ENCODE measurements at regions of chr5 and their contacts with region 1.

Region 1: DNA sequence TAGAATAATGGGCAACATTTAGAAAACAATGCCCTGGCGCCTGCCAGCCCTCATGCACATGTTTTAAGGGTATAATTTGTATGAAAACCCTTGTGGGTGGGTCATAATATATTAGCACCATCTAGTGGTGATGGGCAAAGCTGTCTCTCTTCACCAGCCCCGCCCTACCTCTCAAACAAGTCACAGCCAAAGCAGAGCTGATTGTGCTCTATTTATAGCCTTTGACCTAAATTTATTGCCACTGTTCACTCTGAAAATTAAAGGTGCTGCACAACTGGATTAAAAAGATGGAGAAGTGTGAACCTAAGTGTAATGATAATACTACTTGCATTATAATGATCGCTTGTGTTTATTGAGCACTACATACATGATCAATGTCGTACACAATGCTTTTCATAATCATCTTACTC is 131.9 kb upstream of the ANKH start:
- DNase-seq: peak in 7 of 10 donors; percentile 28 to 92 (median 53)

Region 2: GRCh38 chr5:14399054-14399692 is 604.3 kb before region 1 on chr5:
- intact Hi-C with region 1: loop called (anchors 10 kb)
- DNase-seq: no peak

Region 3: DNA sequence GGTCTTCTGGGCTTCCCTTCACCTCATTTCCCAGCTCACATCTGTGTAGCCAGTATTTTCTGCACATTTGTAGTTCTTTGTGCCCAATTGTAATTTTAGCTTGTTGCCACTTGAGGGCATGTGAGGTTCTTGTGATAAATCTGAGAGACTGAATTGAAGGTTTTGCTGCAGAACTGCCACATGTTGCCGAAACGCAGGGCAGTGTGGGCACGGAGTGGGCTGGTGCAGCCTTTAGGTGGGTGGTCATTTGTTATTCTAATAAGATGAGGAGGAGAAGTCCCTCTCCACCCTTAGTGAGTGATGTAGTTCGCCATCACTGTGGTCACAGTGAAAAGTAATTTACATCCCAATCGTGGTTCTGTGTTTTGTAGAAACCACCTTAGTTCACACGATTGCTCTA is 317.8 kb before region 1 on chr5:
- intact Hi-C with region 1: loop called (anchors 1 kb)
- DNase-seq: peak in 3 of 10 donors; percentile 44 to 87 (median 67)

Region 4: GRCh38 chr5:14727428-14727865 is 276.1 kb before region 1 on chr5:
- intact Hi-C with region 1: loop called (anchors 1 kb)
- DNase-seq: peak; percentile 83 to 99 (median 89)

Region 5: DNA sequence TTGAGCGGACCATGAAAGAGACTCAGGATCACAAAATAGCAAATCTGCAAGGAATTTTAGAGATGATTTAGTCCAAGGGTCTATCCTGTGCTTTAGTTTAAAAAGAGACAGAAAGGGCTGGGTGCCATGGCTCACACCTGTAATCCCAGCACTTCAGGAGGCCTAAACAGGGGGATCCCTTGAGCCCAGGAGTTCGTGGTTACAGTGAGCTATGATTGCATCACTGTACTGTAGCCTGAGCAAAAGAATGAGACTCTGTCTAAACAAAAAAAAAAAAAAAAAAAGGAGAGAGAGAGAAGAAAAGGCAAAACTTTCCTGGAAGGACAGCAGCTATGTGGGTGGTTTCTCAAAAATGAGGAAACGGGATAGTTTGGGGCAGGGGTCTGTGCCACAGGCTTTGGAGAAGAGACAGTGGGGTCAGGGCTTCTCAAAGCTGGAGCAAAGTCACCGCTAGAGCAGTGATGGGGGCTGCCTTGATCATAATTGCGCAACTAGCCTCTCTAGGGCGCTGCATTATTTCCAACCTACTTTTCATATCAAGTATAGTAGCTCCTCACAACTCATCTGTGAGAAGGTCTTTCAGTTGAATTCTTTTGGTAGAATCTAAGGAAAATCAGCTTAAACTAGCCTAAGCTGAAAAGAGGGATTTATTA is 123.5 kb before region 1 on chr5:
- intact Hi-C with region 1: no loop called
- DNase-seq: no peak

Region 6: GRCh38 chr5:15092801-15093200 is 89.3 kb after region 1 on chr5:
- intact Hi-C with region 1: no loop called
- DNase-seq: peak in 1 of 10 donors; percentile 4

Region 7: GRCh38 chr5:15334551-15335266 is 331.2 kb after region 1 on chr5:
- intact Hi-C with region 1: no loop called
- DNase-seq: no peak

Region 8: GRCh38 chr5:15574806-15575325 is 571.4 kb after region 1 on chr5:
- intact Hi-C with region 1: no loop called
- DNase-seq: no peak

Measured in posterior cingulate gyrus (tissue), 11 donors.